Psoas muscle (tissue), 8 donors: ENCODE measurements at regions of chr21 and their contacts with region 1.

Region 1: GRCh38 chr21:26842976-26843932 is 2.0 kb downstream of the ADAMTS1 start:
- DNase-seq: peak; percentile 94 to 96
- ATAC-seq: peak; percentile 65 to 77 (median 72)
- H3K4me3 ChIP-seq: peak overlapping the region; percentile 90
- H3K27ac ChIP-seq: peak overlapping the region; percentile 94
- H3K4me1 ChIP-seq: peaks cover 39% of the 10 kb centered on the region
- H3K27me3 ChIP-seq: no peaks in the 10 kb centered on the region
- CTCF ChIP-seq: peak; percentile 26

Region 2: DNA sequence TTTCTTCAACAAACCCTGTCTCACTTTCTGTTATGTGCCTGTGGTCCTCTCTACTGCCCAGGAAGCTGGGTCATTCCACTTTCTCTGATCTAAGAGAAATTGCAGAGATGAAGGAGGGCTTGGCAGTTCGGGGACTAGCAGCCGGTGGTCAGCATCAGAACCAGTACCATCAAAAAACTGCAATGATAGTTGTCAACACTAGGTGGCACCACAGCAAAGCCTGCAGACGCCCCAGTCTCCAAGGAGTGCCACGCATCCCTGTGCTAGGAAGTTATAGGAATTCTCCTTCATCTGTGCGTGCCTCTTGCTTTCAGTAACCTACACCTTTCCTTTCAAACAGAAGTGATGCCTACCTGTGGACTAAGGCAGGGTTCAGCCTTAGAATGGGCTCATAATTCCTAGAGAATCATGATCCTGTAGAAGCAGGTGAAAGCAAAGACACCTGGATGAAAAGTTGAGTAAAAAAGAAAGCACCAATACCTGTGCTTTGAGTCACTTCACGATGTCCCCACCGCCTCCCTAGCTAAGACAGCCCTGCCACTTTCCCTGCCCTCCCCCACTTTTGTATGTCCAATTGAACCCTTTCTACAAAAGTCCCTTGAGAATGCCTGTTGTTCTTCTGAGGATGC is 127.3 kb before region 1 on chr21:
- intact Hi-C with region 1: loop called in 1 of 2 experiments (anchors 5 kb)
- DNase-seq: no peak
- ATAC-seq: peak; percentile 41 to 82 (median 49)
- H3K4me3 ChIP-seq: no peak overlapping the region
- H3K27ac ChIP-seq: no peak overlapping the region
- H3K4me1 ChIP-seq: peaks cover 8% of the 10 kb centered on the region
- H3K27me3 ChIP-seq: peaks cover 0 to 2% (median 0%) of the 10 kb centered on the region in 3 donors
- CTCF ChIP-seq: peak; percentile 84

Region 3: GRCh38 chr21:26769613-26770188 is 73.6 kb before region 1 on chr21:
- intact Hi-C with region 1: loop called (anchors 2 to 10 kb)
- DNase-seq: no peak
- ATAC-seq: peak in 1 of 4 donors; percentile 49
- H3K4me3 ChIP-seq: no peak overlapping the region
- H3K27ac ChIP-seq: no peak overlapping the region
- H3K4me1 ChIP-seq: no peaks in the 10 kb centered on the region
- H3K27me3 ChIP-seq: no peaks in the 10 kb centered on the region
- CTCF ChIP-seq: peak; percentile 67

Region 4: GRCh38 chr21:27149034-27149433 is 305.8 kb after region 1 on chr21:
- intact Hi-C with region 1: no loop called
- DNase-seq: no peak
- ATAC-seq: no peak
- H3K4me3 ChIP-seq: no peak overlapping the region
- H3K27ac ChIP-seq: no peak overlapping the region
- H3K4me1 ChIP-seq: no peaks in the 10 kb centered on the region
- H3K27me3 ChIP-seq: no peaks in the 10 kb centered on the region
- CTCF ChIP-seq: no peak

Region 5: GRCh38 chr21:27631471-27631870 is 788.2 kb after region 1 on chr21:
- intact Hi-C with region 1: loop called (anchors 5 kb)
- DNase-seq: no peak
- ATAC-seq: no peak
- H3K4me3 ChIP-seq: no peak overlapping the region
- H3K27ac ChIP-seq: no peak overlapping the region
- H3K4me1 ChIP-seq: peaks cover 11% of the 10 kb centered on the region
- H3K27me3 ChIP-seq: no peaks in the 10 kb centered on the region
- CTCF ChIP-seq: no peak

Region 6: DNA sequence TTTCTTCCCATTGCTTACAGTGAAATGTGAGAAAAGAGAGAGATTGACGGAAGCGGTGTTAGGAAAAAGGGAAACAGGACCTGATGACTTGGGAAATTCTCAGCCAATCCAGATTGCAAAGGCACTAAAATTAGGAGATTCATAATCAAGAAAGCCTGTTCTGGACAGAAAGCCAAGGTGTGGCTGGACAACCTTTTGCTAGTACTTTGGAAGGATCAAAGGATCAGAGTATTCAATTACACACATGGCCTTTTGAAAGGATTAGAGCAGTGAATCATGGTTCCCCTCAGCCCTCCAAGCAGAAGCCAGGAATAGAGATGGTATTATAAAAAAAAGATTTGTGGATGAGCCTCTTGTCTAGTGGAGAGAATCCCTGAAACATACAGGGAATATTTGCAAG is 793.4 kb after region 1 on chr21:
- intact Hi-C with region 1: loop called (anchors 5 kb)
- DNase-seq: peak; percentile 15 to 49
- ATAC-seq: peak; percentile 98 to 99 (median 99)
- H3K4me3 ChIP-seq: peak overlapping the region; percentile 28
- H3K27ac ChIP-seq: peak overlapping the region; percentile 92
- H3K4me1 ChIP-seq: peaks cover 19% of the 10 kb centered on the region
- H3K27me3 ChIP-seq: no peaks in the 10 kb centered on the region
- CTCF ChIP-seq: no peak

Region 7: GRCh38 chr21:28069450-28069923 is 1226.2 kb after region 1 on chr21:
- intact Hi-C with region 1: loop called in 1 of 2 experiments (anchors 10 kb)
- DNase-seq: no peak
- ATAC-seq: peak; percentile 59 to 73 (median 68)
- H3K4me3 ChIP-seq: peak overlapping the region; percentile 69
- H3K27ac ChIP-seq: peak overlapping the region; percentile 87
- H3K4me1 ChIP-seq: peaks cover 17% of the 10 kb centered on the region
- H3K27me3 ChIP-seq: no peaks in the 10 kb centered on the region
- CTCF ChIP-seq: no peak

Region 8: GRCh38 chr21:28745131-28746016 is 1902.1 kb after region 1 on chr21:
- intact Hi-C with region 1: loop called (anchors 1 to 10 kb)
- DNase-seq: peak; percentile 62 to 71
- ATAC-seq: peak; percentile 90 to 97 (median 94)
- H3K4me3 ChIP-seq: peak overlapping the region; percentile 70
- H3K27ac ChIP-seq: peak overlapping the region; percentile 74
- H3K4me1 ChIP-seq: peaks cover 6% of the 10 kb centered on the region
- H3K27me3 ChIP-seq: no peaks in the 10 kb centered on the region
- CTCF ChIP-seq: peak; percentile 97